Colonic mucosa (tissue), 4 donors: ENCODE measurements at regions of chr17 and their contacts with region 1.

Region 1: DNA sequence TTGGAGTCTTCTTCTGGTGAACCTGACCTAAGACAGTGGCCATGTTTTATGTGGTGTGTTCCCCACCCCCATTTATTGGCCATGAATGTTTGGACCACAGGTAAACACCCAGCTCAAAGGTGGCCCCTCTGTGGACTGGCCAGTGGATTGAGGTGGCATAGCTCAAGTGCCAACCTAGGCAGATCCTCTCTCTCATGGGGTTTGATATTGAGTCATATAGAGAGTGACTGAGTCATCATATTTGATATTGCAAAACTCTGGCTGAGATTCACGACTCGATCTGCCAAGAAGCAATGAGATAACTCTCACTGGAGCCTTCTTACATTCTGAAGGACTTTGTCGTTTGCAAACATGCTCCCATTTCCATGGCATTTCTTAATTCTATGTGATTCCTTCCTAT is 10.5 kb upstream of the TEKT3 start:
- DNase-seq: peak; percentile 49
- H3K4me3 ChIP-seq: no peak overlapping the region
- H3K27ac ChIP-seq: peak overlapping the region; percentile 51
- H3K4me1 ChIP-seq: peaks cover 6% of the 10 kb centered on the region
- H3K27me3 ChIP-seq: no peaks in the 10 kb centered on the region
- CTCF ChIP-seq: no peak

Region 2: DNA sequence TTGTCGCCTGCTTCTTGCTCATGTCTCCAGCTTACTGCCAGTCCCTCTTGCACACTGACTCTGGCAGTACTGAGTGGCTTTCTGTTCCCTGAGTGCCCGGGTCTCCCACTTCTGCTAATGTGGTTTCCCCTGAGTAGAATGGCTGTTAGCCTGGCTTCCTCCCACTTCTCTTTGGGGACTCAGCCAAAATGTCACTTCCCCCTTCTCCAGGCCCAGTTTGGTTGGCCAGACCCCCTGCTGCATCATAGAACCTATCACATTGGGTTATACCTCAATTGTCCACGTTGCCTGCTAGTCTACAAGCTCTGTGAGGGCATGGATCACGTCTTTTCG is 746.7 kb before region 1 on chr17:
- intact Hi-C with region 1: no loop called
- DNase-seq: peak; percentile 18
- H3K4me3 ChIP-seq: no peak overlapping the region
- H3K27ac ChIP-seq: no peak overlapping the region
- H3K4me1 ChIP-seq: no peaks in the 10 kb centered on the region
- H3K27me3 ChIP-seq: no peaks in the 10 kb centered on the region
- CTCF ChIP-seq: no peak

Region 3: DNA sequence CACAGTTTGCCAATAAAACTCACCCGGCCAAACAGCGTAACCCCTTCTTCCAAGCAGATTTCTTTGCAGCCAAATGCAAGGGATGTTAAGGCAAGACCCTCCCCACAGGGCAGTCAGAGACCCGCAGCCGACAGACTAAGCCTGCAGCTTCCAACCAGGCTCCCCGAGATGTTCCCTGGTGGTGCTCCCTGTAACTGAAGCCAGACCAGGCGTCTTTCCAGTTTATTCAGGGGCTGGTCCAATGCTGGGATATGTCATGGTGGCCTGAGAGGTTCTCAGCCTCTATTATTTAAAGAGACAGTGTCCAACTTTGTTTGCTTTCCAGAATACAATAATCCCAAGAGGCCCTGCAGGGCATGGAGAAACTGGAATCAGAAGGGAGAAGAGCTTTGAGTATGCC is 86.8 kb before region 1 on chr17 and contains the start of gene PMP22:
- intact Hi-C with region 1: loop called (anchors 5 kb)
- DNase-seq: peak; percentile 50
- H3K4me3 ChIP-seq: peak within 1 kb of the TSS; percentile 12
- H3K27ac ChIP-seq: peak within 1 kb of the TSS; percentile 84
- H3K4me1 ChIP-seq: peaks cover 11% of the 10 kb centered on the region
- H3K27me3 ChIP-seq: peaks cover 3% of the 10 kb centered on the region
- CTCF ChIP-seq: no peak
- total RNA-seq, gene PMP22: 12.5 to 40.4 TPM